ENCODE measurements at regions of chr2 and their contacts with region 1.

Region 1: DNA sequence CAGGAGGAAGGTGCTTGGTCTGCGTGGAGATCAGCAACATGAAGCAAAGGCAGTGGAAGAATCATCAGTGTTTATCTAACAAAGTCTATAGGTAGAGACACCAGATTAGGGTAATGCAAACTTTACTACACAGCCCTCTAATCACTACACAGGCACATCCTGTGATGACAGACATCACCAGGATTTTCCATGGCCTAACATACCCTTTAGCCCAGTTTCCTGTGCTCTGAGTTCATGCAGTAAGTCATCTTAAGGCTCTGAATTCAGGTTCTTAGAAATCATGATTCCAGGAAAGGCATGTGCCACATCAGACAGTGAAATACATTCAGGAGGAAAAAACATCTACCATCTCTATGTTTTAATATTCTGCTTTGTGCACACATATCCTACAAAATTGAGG is 708.5 kb upstream of the SLC8A1 start:
- DNase-seq: no peak
- ATAC-seq: no peak
- H3K4me3 ChIP-seq: no peak overlapping the region
- H3K27ac ChIP-seq: no peak overlapping the region
- H3K4me1 ChIP-seq: no peaks in the 10 kb centered on the region
- H3K27me3 ChIP-seq: no peaks in the 10 kb centered on the region
- CTCF ChIP-seq: no peak
- POLR2A ChIP-seq: no peak
- RAD21 ChIP-seq: no peak

Region 2: DNA sequence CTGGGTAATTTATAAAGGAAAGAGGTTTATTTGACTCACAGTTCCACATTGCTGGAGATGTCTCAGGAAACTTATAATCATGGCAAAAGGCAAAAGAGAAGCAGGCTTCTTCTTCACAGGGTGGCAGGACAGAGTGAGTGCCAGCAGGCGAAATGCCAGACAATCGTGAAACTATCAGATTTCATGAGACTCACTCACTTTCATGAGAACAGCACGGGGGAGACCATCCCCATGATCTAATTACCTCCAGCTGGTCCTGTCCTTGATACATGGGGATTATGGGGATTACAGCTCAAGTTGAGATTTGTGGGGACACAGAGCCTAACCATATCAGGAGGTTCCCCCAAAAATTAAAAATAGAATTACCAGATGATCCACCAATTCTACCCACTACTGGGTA is 33.1 kb before region 1 on chr2:
- CTCF ChIA-PET with region 1: no interaction called
- POLR2A ChIA-PET with region 1: no interaction called
- dilution Hi-C with region 1: no loop called
- in situ Hi-C with region 1: no loop called
- intact Hi-C with region 1: no loop called
- DNase-seq: no peak
- ATAC-seq: no peak
- H3K4me3 ChIP-seq: no peak overlapping the region
- H3K27ac ChIP-seq: no peak overlapping the region
- H3K4me1 ChIP-seq: no peaks in the 10 kb centered on the region
- H3K27me3 ChIP-seq: no peaks in the 10 kb centered on the region
- CTCF ChIP-seq: no peak
- POLR2A ChIP-seq: no peak
- RAD21 ChIP-seq: no peak

Region 3: DNA sequence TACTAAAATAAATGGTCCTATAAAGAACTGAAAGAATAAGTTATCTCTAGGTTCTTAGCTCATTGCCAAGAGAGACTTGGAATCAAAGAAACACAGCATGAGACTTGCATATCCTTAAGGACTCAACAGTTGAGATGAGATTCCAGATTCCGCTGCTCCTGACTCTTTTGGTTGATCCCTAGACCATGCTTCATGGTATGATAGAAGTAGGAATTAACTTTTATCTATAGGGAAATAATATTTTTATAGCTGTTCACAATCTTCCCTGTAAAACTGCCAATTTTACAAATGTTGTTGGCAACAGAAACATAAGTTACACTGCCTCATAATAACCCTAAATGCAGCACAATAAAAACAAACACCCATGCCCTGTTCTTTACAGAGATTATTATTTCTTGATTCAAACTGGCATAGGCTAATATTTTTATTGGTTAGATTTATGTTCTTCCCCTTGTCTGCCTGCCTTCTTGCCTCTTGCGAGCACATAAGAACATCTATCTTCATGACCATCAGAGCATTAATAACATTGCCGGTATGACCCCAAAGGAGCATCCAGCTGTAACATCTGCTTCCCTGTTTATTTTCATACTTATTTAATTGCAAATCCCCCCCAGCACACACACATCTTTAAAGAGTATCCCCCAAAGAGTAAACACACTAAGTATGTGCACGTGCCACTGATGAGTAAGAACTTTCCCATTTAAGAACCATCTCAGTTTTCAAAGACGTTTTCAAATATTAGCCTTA is 27.1 kb after region 1 on chr2:
- CTCF ChIA-PET with region 1: interaction called, 3 read pairs
- POLR2A ChIA-PET with region 1: no interaction called
- dilution Hi-C with region 1: no loop called
- in situ Hi-C with region 1: no loop called
- intact Hi-C with region 1: loop called (anchors 1 kb)
- DNase-seq: no peak
- ATAC-seq: no peak
- H3K4me3 ChIP-seq: no peak overlapping the region
- H3K27ac ChIP-seq: no peak overlapping the region
- H3K4me1 ChIP-seq: no peaks in the 10 kb centered on the region
- H3K27me3 ChIP-seq: no peaks in the 10 kb centered on the region
- CTCF ChIP-seq: no peak
- POLR2A ChIP-seq: no peak
- RAD21 ChIP-seq: no peak

Region 4: GRCh38 chr2:41194230-41194629 is 33.8 kb after region 1 on chr2:
- CTCF ChIA-PET with region 1: interaction called, 3 read pairs
- POLR2A ChIA-PET with region 1: no interaction called
- dilution Hi-C with region 1: no loop called
- in situ Hi-C with region 1: no loop called
- intact Hi-C with region 1: loop called (anchors 1 kb)
- DNase-seq: peak; percentile 1
- ATAC-seq: no peak
- H3K4me3 ChIP-seq: no peak overlapping the region
- H3K27ac ChIP-seq: no peak overlapping the region
- H3K4me1 ChIP-seq: no peaks in the 10 kb centered on the region
- H3K27me3 ChIP-seq: no peaks in the 10 kb centered on the region
- CTCF ChIP-seq: no peak
- POLR2A ChIP-seq: no peak
- RAD21 ChIP-seq: no peak